Naive thymus-derived CD4-positive, alpha-beta T cell (primary cell): ENCODE measurements at regions of chr2 and their contacts with region 1.

Region 1: GRCh38 chr2:174522553-174522952 is 35.7 kb upstream of the GPR155 start:
- DNase-seq: peak in 2 of 9 donors; percentile 10 to 13
- ATAC-seq: peak; percentile 49
- H3K4me3 ChIP-seq: no peak overlapping the region
- H3K4me3 Mint-ChIP-seq: no peak overlapping the region
- H3K27ac ChIP-seq: no peak overlapping the region
- H3K27ac Mint-ChIP-seq: no peak overlapping the region
- H3K4me1 ChIP-seq: peaks cover 0 to 5% of the 10 kb centered on the region in 2 donors
- H3K4me1 Mint-ChIP-seq: peaks cover 10 to 28% (median 21%) of the 10 kb centered on the region in 7 donors
- H3K27me3 ChIP-seq: no peaks in the 10 kb centered on the region
- H3K27me3 Mint-ChIP-seq: peaks cover 0 to 23% (median 0%) of the 10 kb centered on the region in 5 donors

Region 2: GRCh38 chr2:174492963-174493431 is 29.6 kb before region 1 on chr2:
- CTCF ChIA-PET with region 1: interaction called, 17 read pairs
- POLR2A ChIA-PET with region 1: interaction called, 6 read pairs
- intact Hi-C with region 1: loop called (anchors 1 to 2 kb)
- DNase-seq: peak; percentile 18 to 89 (median 85)
- ATAC-seq: peak; percentile 95
- H3K4me3 ChIP-seq: peak overlapping the region; percentile 36
- H3K4me3 Mint-ChIP-seq: peak overlapping the region; percentile 74 to 92 (median 87)
- H3K27ac ChIP-seq: peak overlapping the region; percentile 85
- H3K27ac Mint-ChIP-seq: peak overlapping the region; percentile 91 to 100 (median 98)
- H3K4me1 ChIP-seq: peaks cover 49 to 50% of the 10 kb centered on the region in 2 donors
- H3K4me1 Mint-ChIP-seq: peaks cover 40 to 87% (median 77%) of the 10 kb centered on the region in 7 donors
- H3K27me3 ChIP-seq: no peaks in the 10 kb centered on the region
- H3K27me3 Mint-ChIP-seq: no peaks in the 10 kb centered on the region

Region 3: GRCh38 chr2:176518823-176519222 is 1996.3 kb after region 1 on chr2:
- CTCF ChIA-PET with region 1: no interaction called
- POLR2A ChIA-PET with region 1: no interaction called
- intact Hi-C with region 1: no loop called
- DNase-seq: no peak
- ATAC-seq: no peak
- H3K4me3 ChIP-seq: no peak overlapping the region
- H3K4me3 Mint-ChIP-seq: no peak overlapping the region
- H3K27ac ChIP-seq: no peak overlapping the region
- H3K27ac Mint-ChIP-seq: no peak overlapping the region
- H3K4me1 ChIP-seq: peaks cover 0 to 4% of the 10 kb centered on the region in 2 donors
- H3K4me1 Mint-ChIP-seq: peaks cover 4 to 17% (median 12%) of the 10 kb centered on the region in 7 donors
- H3K27me3 ChIP-seq: no peaks in the 10 kb centered on the region
- H3K27me3 Mint-ChIP-seq: peaks cover 0 to 20% (median 3%) of the 10 kb centered on the region in 5 donors